ENCODE measurements at regions of chr9 and their contacts with region 1.

Region 1: GRCh38 chr9:19230356-19231125 is at the start of gene DENND4C:
- DNase-seq: peak; percentile 87
- ATAC-seq: peak; percentile 81
- H3K4me3 Mint-ChIP-seq: no peak within 1 kb of the TSS
- H3K27ac Mint-ChIP-seq: peak within 1 kb of the TSS; percentile 58
- H3K4me1 Mint-ChIP-seq: peaks cover 14% of the 10 kb centered on the region
- H3K27me3 Mint-ChIP-seq: no peaks in the 10 kb centered on the region
- total RNA-seq, gene DENND4C: 17.2 to 22.2 TPM

Region 2: DNA sequence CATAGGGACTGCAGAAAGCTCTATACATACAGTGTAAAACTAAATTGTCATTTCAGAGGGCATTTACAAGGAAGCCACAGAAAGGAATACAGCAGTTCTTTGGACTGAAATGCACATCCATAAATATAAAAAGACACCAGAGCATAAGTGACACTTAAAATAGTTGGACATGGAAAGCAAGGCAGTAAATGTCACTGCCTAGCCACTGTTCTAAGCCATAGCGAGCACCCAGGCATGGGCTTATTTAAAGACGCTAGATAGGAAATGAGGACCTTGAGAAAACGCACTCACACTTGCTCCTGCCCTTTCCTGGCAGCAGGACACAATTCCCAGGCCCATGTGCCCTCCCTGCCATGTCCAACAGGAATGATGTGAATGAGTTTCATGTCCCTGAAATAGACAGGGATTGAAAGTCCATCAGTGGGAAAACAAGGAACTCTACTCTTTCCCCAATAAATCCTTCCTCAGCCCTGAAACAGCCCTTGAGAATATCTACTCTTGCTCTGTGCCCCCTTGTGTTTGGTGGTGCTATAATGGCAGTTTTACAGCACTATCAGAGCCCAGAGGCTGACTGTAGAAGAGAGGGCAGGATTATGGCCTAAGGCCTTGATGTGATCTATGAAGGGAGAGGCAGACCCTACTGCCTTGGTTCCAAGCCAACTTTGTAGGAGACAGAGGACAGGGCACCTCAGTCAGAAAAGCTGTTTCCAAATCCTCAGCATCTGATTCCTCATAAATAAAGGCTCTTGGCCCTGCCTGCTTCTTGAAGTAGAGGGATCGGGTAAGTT is 380.5 kb before region 1 on chr9:
- CTCF ChIA-PET with region 1: no interaction called
- POLR2A ChIA-PET with region 1: no interaction called
- intact Hi-C with region 1: no loop called
- DNase-seq: no peak
- ATAC-seq: no peak
- H3K4me3 Mint-ChIP-seq: no peak overlapping the region
- H3K27ac Mint-ChIP-seq: no peak overlapping the region
- H3K4me1 Mint-ChIP-seq: no peaks in the 10 kb centered on the region
- H3K27me3 Mint-ChIP-seq: peaks cover 2% of the 10 kb centered on the region

Region 3: GRCh38 chr9:19048966-19049916 is 181.3 kb before region 1 on chr9 and contains the start of gene RRAGA:
- CTCF ChIA-PET with region 1: interaction called, 12 read pairs
- POLR2A ChIA-PET with region 1: interaction called, 3 read pairs
- intact Hi-C with region 1: loop called (anchors 1 to 2 kb)
- DNase-seq: peak; percentile 97
- ATAC-seq: peak; percentile 89
- H3K4me3 Mint-ChIP-seq: peak within 1 kb of the TSS; percentile 95
- H3K27ac Mint-ChIP-seq: peak within 1 kb of the TSS; percentile 96
- H3K4me1 Mint-ChIP-seq: peaks cover 26% of the 10 kb centered on the region
- H3K27me3 Mint-ChIP-seq: no peaks in the 10 kb centered on the region
- total RNA-seq, gene RRAGA: 42.4 to 53.4 TPM

Region 4: GRCh38 chr9:19127881-19128500 is 102.5 kb before region 1 on chr9:
- CTCF ChIA-PET with region 1: interaction called, 3 read pairs
- POLR2A ChIA-PET with region 1: no interaction called
- intact Hi-C with region 1: loop called (anchors 1 to 2 kb)
- DNase-seq: peak; percentile 54
- ATAC-seq: peak; percentile 14
- H3K4me3 Mint-ChIP-seq: peak overlapping the region; percentile 92
- H3K27ac Mint-ChIP-seq: peak overlapping the region; percentile 88
- H3K4me1 Mint-ChIP-seq: peaks cover 58% of the 10 kb centered on the region
- H3K27me3 Mint-ChIP-seq: no peaks in the 10 kb centered on the region

Region 5: DNA sequence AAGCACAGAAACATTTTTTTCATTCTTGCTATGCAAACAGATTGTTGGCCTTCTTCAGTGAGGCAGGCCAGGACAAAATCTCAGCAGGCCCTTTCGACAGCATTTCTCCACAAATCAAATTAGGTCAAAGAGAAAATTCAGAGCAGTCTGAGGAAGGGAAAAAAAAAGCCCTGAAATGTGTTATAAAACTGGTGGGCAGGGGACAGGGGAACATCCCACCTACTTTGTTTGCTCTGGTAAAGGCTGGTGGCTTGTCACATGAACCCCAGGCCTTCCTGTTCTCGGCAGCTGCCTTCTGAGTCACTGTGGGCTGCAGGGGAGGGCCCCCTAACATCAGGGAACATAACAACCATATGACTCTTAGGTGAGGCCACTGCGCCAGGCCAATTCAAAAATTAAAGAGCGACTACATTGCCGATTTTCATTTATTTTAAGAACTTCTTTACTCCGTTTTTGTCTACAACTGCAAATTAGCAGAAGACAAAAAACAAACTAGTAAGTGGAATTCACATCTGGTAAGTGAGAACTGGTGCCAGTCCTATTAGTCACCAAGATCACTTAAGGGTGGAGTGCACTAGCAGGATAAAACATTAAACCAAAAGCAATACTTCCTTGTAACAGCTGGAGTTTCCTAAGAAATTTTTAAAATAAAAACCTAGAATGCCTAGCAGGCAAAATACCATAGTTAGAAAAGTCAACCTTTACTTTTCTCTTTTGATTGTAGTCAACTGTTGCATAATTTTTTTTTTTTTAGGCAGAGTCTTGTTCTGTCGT is 46.2 kb before region 1 on chr9:
- CTCF ChIA-PET with region 1: interaction called, 6 read pairs
- POLR2A ChIA-PET with region 1: interaction called, 4 read pairs
- intact Hi-C with region 1: loop called (anchors 1 kb)
- DNase-seq: peak; percentile 91
- ATAC-seq: peak; percentile 99
- H3K4me3 Mint-ChIP-seq: peak overlapping the region; percentile 56
- H3K27ac Mint-ChIP-seq: peak overlapping the region; percentile 91
- H3K4me1 Mint-ChIP-seq: peaks cover 21% of the 10 kb centered on the region
- H3K27me3 Mint-ChIP-seq: no peaks in the 10 kb centered on the region

Region 6: DNA sequence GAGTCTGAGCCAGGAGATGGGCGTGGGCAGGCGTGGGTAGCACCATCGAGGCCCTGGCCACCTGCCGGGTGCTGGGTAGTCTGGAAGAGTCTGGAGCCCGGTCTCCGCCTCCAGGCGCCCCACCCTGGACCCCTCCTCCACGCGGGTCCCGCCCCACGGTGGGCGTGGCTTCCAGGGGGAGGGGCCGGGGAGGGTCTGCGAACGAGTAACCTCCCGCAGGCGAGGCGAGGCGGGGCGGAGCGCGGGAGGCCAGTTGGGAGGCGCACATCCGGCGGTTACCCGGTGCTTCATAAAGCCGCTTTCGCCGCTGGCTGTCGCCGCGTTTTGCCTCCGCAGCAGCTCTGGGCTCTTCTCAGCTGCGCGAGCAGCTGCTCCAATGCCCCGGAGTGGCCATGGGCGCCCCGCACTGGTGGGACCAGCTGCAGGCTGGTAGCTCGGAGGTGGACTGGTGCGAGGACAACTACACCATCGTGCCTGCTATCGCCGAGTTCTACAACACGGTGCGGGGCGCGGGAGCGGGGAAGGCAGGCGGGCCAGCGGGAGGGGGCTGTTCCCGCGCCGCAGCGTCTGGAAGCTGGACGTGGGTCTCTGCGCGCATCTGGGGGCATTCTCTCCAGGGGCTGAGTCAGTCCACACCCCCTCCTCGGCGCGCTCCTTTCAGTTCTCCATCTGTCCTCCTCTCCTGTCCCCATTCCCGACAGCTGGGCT is 178.3 kb after region 1 on chr9 and contains the start of gene ACER2:
- CTCF ChIA-PET with region 1: no interaction called
- POLR2A ChIA-PET with region 1: no interaction called
- intact Hi-C with region 1: loop called in 1 of 2 experiments (anchors 1 kb)
- DNase-seq: peak; percentile 96
- ATAC-seq: peak; percentile 96
- H3K4me3 Mint-ChIP-seq: peak within 1 kb of the TSS; percentile 89
- H3K27ac Mint-ChIP-seq: peak within 1 kb of the TSS; percentile 68
- H3K4me1 Mint-ChIP-seq: peaks cover 6% of the 10 kb centered on the region
- H3K27me3 Mint-ChIP-seq: no peaks in the 10 kb centered on the region
- total RNA-seq, gene ACER2: 1.5 to 1.6 TPM

Region 7: GRCh38 chr9:19493174-19493811 is 262.8 kb after region 1 on chr9:
- CTCF ChIA-PET with region 1: no interaction called
- POLR2A ChIA-PET with region 1: no interaction called
- intact Hi-C with region 1: no loop called
- DNase-seq: peak; percentile 63
- ATAC-seq: peak; percentile 68
- H3K4me3 Mint-ChIP-seq: peak overlapping the region; percentile 27
- H3K27ac Mint-ChIP-seq: peak overlapping the region; percentile 40
- H3K4me1 Mint-ChIP-seq: peaks cover 15% of the 10 kb centered on the region
- H3K27me3 Mint-ChIP-seq: peaks cover 2% of the 10 kb centered on the region

Region 8: DNA sequence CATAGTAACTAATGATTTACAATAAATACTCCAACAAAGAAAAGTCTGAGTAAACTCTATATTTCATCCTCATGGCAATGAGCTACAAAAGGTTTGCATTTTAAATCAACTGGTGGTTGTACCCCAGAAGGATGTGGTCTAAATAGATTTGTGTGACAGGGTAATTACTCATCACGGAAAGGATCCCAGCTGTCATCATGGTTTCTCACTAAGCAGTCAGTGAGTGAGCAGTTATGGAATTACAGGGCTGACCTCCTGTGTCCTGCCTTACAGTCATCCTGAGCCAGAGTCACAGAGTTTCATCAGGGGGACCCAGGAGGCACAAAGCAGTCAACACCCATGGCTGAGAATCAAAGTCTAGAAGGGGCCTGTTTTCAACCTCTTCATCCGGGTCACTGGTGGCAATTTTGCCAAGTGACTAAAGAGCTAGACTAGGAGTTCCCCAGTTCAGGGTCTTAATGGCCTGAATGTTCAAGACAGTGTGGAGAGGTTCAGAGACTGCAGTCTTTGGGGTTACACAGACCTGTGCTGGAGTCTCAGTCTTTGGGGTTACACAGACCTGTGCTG is 769.0 kb after region 1 on chr9:
- CTCF ChIA-PET with region 1: no interaction called
- POLR2A ChIA-PET with region 1: no interaction called
- intact Hi-C with region 1: loop called in 1 of 2 experiments (anchors 10 kb)
- DNase-seq: peak; percentile 81
- ATAC-seq: peak; percentile 94
- H3K4me3 Mint-ChIP-seq: peak overlapping the region; percentile 42
- H3K27ac Mint-ChIP-seq: peak overlapping the region; percentile 97
- H3K4me1 Mint-ChIP-seq: peaks cover 46% of the 10 kb centered on the region
- H3K27me3 Mint-ChIP-seq: no peaks in the 10 kb centered on the region